B cell (primary cell): ENCODE measurements at regions of chr11 and their contacts with region 1.

Region 1: GRCh38 chr11:128437137-128437536 is 150.2 kb downstream of the ETS1 start:
- DNase-seq: no peak
- ATAC-seq: no peak
- H3K4me3 ChIP-seq: no peak overlapping the region
- H3K4me3 Mint-ChIP-seq: no peak overlapping the region
- H3K27ac ChIP-seq: no peak overlapping the region
- H3K27ac Mint-ChIP-seq: no peak overlapping the region
- H3K4me1 ChIP-seq: peaks cover 5 to 9% of the 10 kb centered on the region in 2 donors
- H3K4me1 Mint-ChIP-seq: peaks cover 12% of the 10 kb centered on the region
- H3K27me3 ChIP-seq: no peaks in the 10 kb centered on the region
- H3K27me3 Mint-ChIP-seq: no peaks in the 10 kb centered on the region
- CTCF ChIP-seq: no peak

Region 2: DNA sequence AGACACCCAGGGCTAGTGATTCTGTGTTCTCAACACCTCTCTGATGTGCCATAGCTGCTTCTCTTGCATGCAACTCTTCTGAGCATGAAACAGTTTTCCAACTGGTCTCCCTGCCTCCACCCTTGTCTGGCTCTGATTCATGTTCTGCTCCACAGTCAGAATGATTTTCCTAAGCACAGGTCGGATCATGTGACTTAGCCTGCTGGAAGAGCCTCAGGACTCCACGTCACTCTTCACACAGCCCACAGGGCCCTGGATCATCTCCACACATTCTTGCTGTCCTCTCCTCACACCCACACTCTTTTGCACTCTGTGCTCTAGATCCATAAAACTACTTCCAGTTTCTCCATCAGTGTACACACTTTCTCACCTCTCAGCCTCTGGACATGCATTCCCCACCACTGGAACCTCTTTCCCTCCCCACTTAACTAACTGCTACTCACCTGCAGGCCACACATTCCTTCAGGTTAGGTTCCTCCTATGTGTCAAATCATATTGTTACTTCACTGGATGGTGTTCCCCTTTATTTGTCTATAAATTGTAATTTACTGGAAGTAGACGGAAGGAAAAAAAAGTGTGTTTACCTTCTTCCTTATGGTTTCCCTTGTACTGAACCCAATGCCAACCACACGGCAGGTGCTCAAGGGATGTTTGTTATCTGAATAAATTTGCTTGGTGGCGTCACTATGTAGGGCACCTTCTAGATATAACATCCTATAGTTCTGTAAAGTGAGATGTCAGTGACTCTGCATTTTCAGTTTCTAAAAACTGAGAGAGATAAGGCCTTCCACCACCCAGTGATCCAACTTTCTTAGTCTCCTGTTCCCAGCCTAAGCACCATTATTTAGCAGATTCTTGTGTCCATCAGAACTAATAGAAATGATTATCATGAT is 16.6 kb after region 1 on chr11:
- CTCF ChIA-PET with region 1: interaction called, 3 read pairs
- POLR2A ChIA-PET with region 1: no interaction called
- intact Hi-C with region 1: loop called (anchors 2 kb)
- DNase-seq: no peak
- ATAC-seq: no peak
- H3K4me3 ChIP-seq: no peak overlapping the region
- H3K4me3 Mint-ChIP-seq: no peak overlapping the region
- H3K27ac ChIP-seq: peak overlapping the region in 1 of 2 donors; percentile 15
- H3K27ac Mint-ChIP-seq: peak overlapping the region; percentile 61
- H3K4me1 ChIP-seq: peaks cover 0 to 10% of the 10 kb centered on the region in 2 donors
- H3K4me1 Mint-ChIP-seq: peaks cover 52% of the 10 kb centered on the region
- H3K27me3 ChIP-seq: no peaks in the 10 kb centered on the region
- H3K27me3 Mint-ChIP-seq: no peaks in the 10 kb centered on the region
- CTCF ChIP-seq: no peak